Breast epithelium (tissue), 4 donors: ENCODE measurements at regions of chr6 and their contacts with region 1.

Region 1: GRCh38 chr6:53956068-53956711 is 155.1 kb upstream of the MLIP start:
- DNase-seq: peak; percentile 29 to 72
- H3K4me3 ChIP-seq: no peak overlapping the region
- H3K27ac ChIP-seq: no peak overlapping the region
- H3K4me1 ChIP-seq: no peaks in the 10 kb centered on the region
- H3K27me3 ChIP-seq: no peaks in the 10 kb centered on the region
- CTCF ChIP-seq: peak in 2 of 3 donors; percentile 52 to 61
- POLR2A ChIP-seq: no peak

Region 2: GRCh38 chr6:53095716-53096115 is 860.5 kb before region 1 on chr6:
- intact Hi-C with region 1: loop called (anchors 5 kb)
- DNase-seq: no peak
- H3K4me3 ChIP-seq: no peak overlapping the region
- H3K27ac ChIP-seq: no peak overlapping the region
- H3K4me1 ChIP-seq: no peaks in the 10 kb centered on the region
- H3K27me3 ChIP-seq: no peaks in the 10 kb centered on the region
- CTCF ChIP-seq: no peak
- POLR2A ChIP-seq: no peak

Region 3: DNA sequence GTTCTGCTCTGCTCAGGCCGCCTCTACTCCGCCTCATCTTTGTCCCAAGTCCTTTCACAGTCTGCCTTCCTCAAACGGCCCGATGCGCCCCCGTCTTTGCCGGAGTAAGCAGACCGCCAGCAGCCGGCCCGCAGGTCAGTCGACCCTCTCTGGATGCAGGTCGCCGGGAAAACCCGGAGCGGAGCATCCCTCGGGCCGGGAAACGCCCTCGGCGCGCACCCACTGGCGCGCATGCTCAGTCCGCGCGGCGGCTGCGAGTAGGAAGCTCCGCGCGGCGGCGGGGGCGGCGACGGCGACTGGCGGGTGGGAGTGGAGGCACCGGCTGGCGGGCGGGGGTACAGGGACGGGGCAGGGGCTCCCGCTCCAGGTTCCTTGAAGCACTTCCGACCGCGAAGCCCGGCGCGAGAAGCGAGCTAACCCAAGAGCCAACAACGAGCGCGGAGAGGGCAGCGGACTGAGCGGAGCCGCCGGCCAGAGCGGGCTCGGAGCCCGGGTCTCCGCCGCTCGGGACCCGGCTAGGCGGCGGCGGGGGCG is 161.4 kb before region 1 on chr6 and contains the start of gene LRRC1:
- intact Hi-C with region 1: loop called (anchors 10 kb)
- DNase-seq: peak; percentile 73 to 82
- H3K4me3 ChIP-seq: peak within 1 kb of the TSS; percentile 78 to 93 (median 79)
- H3K27ac ChIP-seq: peak within 1 kb of the TSS; percentile 79 to 88
- H3K4me1 ChIP-seq: peaks cover 3 to 8% of the 10 kb centered on the region in 2 donors
- H3K27me3 ChIP-seq: no peaks in the 10 kb centered on the region
- CTCF ChIP-seq: peak in 1 of 3 donors; percentile 5
- POLR2A ChIP-seq: peak; percentile 55
- total RNA-seq, gene LRRC1: 10.1 to 37.9 (median 37.4) TPM